Activated CD4-positive, alpha-beta T cell treated with anti-CD3 and anti-CD28 coated beads for 36 hours (primary cell): ENCODE measurements at regions of chr2 and their contacts with region 1.

Region 1: DNA sequence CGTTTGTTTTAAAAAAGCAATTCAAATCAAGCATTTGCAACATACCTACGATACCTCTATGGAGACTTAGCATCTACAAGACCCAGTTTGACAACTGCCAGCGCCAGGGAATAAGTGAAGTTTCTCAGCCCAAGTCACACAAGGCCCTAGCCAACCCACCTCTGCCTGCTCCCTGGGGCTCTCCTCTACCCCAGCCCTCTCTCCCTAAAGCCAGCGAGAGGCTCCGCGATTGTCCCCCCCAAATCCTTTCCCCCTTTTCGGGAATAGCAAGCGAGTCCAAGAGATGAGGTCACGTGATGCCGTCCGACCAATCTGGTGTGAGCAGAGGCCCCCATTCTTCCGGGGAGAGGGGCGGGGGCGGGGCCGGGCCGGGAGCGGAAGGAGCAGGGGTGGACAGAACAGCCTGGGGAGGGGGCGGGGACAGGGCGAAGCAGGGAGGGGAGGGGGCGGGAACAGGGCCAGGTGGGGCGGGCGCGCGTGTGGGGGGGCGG is 102.1 kb upstream of the RAB6C start:
- DNase-seq: peak; percentile 90
- ATAC-seq: peak; percentile 95
- H3K4me3 Mint-ChIP-seq: peak overlapping the region; percentile 87
- H3K27ac Mint-ChIP-seq: peak overlapping the region; percentile 87
- H3K4me1 Mint-ChIP-seq: peaks cover 11% of the 10 kb centered on the region
- H3K27me3 Mint-ChIP-seq: no peaks in the 10 kb centered on the region

Region 2: GRCh38 chr2:130727286-130728018 is 850.1 kb after region 1 on chr2:
- CTCF ChIA-PET with region 1: no interaction called
- POLR2A ChIA-PET with region 1: no interaction called
- intact Hi-C with region 1: loop called in 1 of 2 experiments (anchors 5 kb)
- DNase-seq: peak; percentile 93
- ATAC-seq: peak; percentile 97
- H3K4me3 Mint-ChIP-seq: peak overlapping the region; percentile 67
- H3K27ac Mint-ChIP-seq: peak overlapping the region; percentile 55
- H3K4me1 Mint-ChIP-seq: peaks cover 3% of the 10 kb centered on the region
- H3K27me3 Mint-ChIP-seq: peaks cover 8% of the 10 kb centered on the region